ENCODE measurements at regions of chr2 and their contacts with region 1.

Region 1: DNA sequence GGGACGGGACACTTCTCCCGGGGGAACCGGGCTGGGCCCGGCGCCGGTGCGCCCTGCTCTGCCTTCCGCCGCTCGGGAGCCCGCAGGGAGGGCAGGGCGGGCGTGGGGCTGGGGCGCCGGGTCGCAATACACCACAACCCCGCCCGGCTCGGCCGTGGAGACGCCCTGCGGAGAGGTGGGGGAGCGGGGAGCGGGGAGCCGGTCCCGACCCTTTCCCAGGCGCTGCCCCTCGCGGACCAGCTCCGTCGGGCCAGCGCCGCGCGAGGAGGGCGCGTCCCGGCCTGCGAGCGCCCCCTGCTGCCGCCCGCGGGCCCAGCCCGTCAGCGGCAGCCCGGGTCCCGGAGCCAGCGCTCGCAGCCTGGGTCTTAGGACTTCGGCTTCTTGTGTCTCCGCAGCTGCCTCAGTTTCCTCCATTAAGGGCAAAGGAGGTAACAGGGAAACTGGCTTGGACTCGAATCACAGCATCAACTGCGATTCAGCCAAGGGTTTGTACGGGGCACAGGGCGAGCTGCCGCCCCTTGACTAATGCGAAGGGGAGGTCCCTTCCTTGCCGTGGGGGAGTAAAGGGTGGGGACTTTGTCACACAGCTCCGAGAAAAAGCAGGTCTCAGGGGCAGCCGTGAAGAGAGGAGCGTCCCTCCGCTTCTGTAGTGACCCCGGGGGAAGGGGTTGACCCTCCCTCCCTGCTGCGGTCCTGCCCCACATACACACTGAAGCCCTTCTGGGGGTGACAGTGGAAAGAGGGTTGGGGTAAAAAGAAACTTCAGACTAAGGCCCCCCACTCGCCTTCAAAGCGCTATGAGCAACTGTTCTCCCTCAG is 717 bp upstream of the ADRA2B start:
- DNase-seq: peak; percentile 57
- H3K4me3 ChIP-seq: peak overlapping the region; percentile 61
- H3K27ac ChIP-seq: peak overlapping the region; percentile 20
- H3K4me1 ChIP-seq: peaks cover 4% of the 10 kb centered on the region
- H3K27me3 ChIP-seq: peaks cover 8% of the 10 kb centered on the region
- CTCF ChIP-seq: peak; percentile 63

Region 2: DNA sequence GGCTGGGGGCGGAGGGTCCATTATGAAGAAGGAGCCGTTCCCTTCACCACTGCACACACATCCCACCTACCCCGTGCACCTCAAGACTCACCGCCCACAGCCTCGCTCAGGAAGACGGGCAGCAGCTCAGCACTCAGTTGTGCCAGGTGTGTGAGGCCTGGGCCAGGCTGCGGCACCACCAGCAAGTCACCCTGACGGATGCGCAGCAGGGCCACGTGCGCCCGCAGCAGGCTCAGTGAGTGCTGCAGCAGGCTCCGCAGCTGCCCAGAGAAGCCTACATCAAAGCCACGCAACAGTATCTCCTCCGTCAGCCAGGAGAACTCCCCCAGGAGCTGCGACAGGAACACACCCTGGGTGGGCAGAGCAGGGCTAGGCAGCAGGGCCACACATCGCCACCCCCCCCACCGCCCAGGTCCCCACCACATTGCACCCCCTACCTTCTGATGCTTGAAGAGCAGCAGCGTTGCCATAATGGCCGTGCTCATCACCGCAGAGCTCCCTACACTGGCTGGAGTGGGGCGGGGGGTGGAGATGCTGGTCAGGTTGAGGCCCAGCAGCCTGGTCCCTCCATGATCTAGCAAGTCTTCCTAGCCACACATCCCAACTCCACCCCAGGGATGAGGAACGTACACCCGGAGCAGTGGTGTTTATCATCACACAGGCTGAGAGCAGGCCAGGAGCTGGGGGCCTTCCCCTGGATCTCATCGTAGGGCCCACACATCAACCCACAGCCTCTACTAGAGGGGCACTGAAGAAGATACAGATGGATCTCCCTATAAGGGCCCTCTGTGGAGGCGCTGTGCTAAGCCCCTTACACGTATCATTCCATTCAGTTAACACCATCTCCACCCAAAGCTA is 92.5 kb before region 1 on chr2:
- intact Hi-C with region 1: loop called (anchors 10 kb)
- DNase-seq: no peak
- H3K4me3 ChIP-seq: no peak overlapping the region
- H3K27ac ChIP-seq: no peak overlapping the region
- H3K4me1 ChIP-seq: no peaks in the 10 kb centered on the region
- H3K27me3 ChIP-seq: no peaks in the 10 kb centered on the region
- CTCF ChIP-seq: no peak

Measured in colonic mucosa (tissue), 4 donors.